Activated CD8-positive, alpha-beta T cell treated with anti-CD3 and anti-CD28 coated beads, Interleukin-2, amount 10 ng/mL, durations not matched to agents 7 days and 5 days (primary cell): ENCODE measurements at regions of chr11 and their contacts with region 1.

Region 1: GRCh38 chr11:3091791-3092602 is 34.8 kb upstream of the CARS1 start:
- DNase-seq: peak; percentile 80
- ATAC-seq: peak; percentile 91
- H3K4me3 Mint-ChIP-seq: no peak overlapping the region
- H3K27ac Mint-ChIP-seq: peak overlapping the region; percentile 57
- H3K4me1 Mint-ChIP-seq: peaks cover 12% of the 10 kb centered on the region
- H3K27me3 Mint-ChIP-seq: no peaks in the 10 kb centered on the region

Region 2: GRCh38 chr11:2837096-2837601 is 254.8 kb before region 1 on chr11:
- CTCF ChIA-PET with region 1: no interaction called
- POLR2A ChIA-PET with region 1: no interaction called
- DNase-seq: no peak
- ATAC-seq: no peak
- H3K4me3 Mint-ChIP-seq: no peak overlapping the region
- H3K27ac Mint-ChIP-seq: no peak overlapping the region
- H3K4me1 Mint-ChIP-seq: no peaks in the 10 kb centered on the region
- H3K27me3 Mint-ChIP-seq: no peaks in the 10 kb centered on the region

Region 3: DNA sequence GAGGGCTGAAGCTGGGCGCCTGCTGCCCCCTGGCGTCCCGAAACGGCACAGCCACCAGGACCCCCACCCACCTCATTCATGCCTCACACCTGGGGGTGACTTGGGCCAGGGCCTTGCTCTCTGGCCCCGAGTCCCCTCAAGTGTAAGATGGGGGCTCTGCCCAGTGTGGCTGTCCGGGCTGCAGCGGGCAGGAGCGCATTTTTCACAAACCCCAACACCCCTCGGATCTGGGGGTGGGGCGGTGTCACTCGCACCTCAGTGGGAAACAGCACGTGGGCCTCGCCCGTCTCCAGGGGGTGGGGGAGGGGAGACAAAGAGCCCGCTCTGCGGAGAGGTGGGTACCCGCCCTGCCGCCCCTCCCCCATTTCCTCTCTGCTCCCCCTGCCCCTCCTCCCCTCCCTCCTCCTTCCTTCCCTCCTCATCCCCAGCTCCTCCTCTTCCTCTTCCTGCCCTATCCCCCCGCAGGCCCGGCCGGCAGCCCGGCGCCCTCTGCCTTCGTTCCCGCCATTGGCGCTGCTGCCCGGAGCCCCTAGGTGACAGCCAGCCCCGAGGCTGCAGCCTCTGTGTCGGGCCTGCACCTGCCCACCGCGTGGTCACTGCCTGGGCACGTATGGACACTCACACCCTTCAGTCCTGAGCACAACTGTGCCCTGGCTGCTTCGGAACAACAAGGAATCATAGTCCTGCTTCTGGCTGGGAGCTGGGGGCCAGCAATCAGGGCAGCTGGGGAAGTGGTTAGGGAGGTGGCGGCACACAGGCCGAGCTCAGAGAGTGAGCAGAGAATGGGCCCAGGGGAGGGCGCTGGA is 199.6 kb before region 1 on chr11:
- CTCF ChIA-PET with region 1: interaction called, 22 read pairs
- POLR2A ChIA-PET with region 1: no interaction called
- DNase-seq: peak; percentile 86
- ATAC-seq: peak; percentile 70
- H3K4me3 Mint-ChIP-seq: peak overlapping the region; percentile 80
- H3K27ac Mint-ChIP-seq: peak overlapping the region; percentile 92
- H3K4me1 Mint-ChIP-seq: peaks cover 34% of the 10 kb centered on the region
- H3K27me3 Mint-ChIP-seq: peaks cover under 1% of the 10 kb centered on the region

Region 4: GRCh38 chr11:2975594-2975993 is 116.4 kb before region 1 on chr11:
- CTCF ChIA-PET with region 1: interaction called, 14 read pairs
- POLR2A ChIA-PET with region 1: interaction called, 4 read pairs
- DNase-seq: peak; percentile 70
- ATAC-seq: peak; percentile 90
- H3K4me3 Mint-ChIP-seq: no peak overlapping the region
- H3K27ac Mint-ChIP-seq: peak overlapping the region; percentile 43
- H3K4me1 Mint-ChIP-seq: peaks cover 36% of the 10 kb centered on the region
- H3K27me3 Mint-ChIP-seq: no peaks in the 10 kb centered on the region

Region 5: DNA sequence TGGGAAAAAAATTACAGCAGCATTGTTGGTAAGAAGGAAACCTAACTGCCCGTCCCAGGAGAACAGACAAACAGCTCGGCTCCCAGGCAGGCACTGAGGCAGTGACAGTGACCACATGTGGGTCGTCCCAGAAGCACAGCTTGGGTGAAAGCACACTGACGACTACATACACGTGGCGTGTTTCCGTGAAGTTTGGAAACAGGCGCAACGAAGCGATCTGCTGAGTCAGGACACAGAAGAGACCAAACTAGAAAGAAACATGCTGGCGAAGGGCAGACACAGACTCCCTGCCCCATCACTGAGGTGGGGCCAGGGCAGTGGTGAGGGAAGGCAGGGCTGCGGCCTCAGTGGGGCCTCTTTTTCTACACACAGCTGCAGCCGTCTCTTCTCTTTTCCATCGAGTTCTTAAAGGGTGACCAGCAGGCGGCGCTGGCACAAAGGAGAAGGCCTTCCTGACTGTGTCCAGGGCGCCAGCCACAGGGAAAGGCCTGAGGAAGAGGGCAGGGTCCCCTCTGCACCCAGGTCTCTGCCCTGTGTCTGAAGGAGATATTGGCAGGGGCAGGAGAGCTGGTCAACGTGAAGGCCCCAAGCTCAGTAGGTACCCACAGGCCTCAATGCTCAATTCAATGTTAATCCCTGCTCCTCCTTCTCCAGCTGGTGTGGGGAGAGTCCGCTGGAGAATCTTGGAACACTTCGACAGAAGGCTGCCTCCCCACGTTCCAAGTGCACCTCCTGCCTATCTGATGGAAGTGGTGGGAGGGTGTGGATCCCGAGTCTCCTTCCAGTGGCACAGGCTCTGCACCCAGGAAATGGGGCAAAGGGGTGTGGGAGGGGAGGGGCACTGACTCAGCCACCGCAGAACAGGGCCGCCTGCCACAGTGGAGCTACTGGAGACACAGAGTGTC is 54.7 kb before region 1 on chr11:
- CTCF ChIA-PET with region 1: interaction called, 61 read pairs
- POLR2A ChIA-PET with region 1: no interaction called
- DNase-seq: peak; percentile 58
- ATAC-seq: peak; percentile 62
- H3K4me3 Mint-ChIP-seq: no peak overlapping the region
- H3K27ac Mint-ChIP-seq: peak overlapping the region; percentile 69
- H3K4me1 Mint-ChIP-seq: peaks cover 31% of the 10 kb centered on the region
- H3K27me3 Mint-ChIP-seq: no peaks in the 10 kb centered on the region

Region 6: GRCh38 chr11:3080733-3081385 is 11.1 kb before region 1 on chr11:
- CTCF ChIA-PET with region 1: interaction called, 17 read pairs
- POLR2A ChIA-PET with region 1: no interaction called
- DNase-seq: no peak
- ATAC-seq: no peak
- H3K4me3 Mint-ChIP-seq: no peak overlapping the region
- H3K27ac Mint-ChIP-seq: no peak overlapping the region
- H3K4me1 Mint-ChIP-seq: no peaks in the 10 kb centered on the region
- H3K27me3 Mint-ChIP-seq: peaks cover 13% of the 10 kb centered on the region

Region 7: DNA sequence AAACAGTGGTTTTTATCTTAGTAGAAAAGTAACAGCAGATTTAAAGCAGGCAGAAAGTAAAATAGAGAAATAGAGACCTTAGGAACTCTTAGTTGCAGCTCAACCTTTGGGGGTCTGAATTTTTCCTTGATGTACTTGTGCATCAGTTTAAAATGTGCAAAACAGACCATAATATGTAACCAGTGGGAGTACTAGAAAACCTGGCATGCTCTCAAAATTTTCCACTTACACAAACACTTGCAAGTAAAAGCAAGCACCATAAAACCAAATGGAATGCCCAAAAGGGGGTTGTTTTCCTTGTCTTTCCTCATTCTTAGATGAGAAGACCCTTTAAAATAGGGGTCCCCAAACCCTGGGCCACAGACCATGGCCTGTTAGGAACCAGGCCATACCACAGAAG is 153.1 kb after region 1 on chr11:
- CTCF ChIA-PET with region 1: no interaction called
- POLR2A ChIA-PET with region 1: no interaction called
- DNase-seq: no peak
- ATAC-seq: no peak
- H3K4me3 Mint-ChIP-seq: no peak overlapping the region
- H3K27ac Mint-ChIP-seq: no peak overlapping the region
- H3K4me1 Mint-ChIP-seq: no peaks in the 10 kb centered on the region
- H3K27me3 Mint-ChIP-seq: peaks cover 10% of the 10 kb centered on the region